ENCODE measurements at regions of chr15 and their contacts with region 1.

Region 1: GRCh38 chr15:89177633-89178306 is 43.6 kb downstream of the RLBP1 start:
- DNase-seq: peak; percentile 77
- H3K4me3 Mint-ChIP-seq: no peak overlapping the region
- H3K27ac Mint-ChIP-seq: no peak overlapping the region
- H3K4me1 Mint-ChIP-seq: peaks cover 39% of the 10 kb centered on the region
- H3K27me3 Mint-ChIP-seq: no peaks in the 10 kb centered on the region

Region 2: GRCh38 chr15:88897456-88898194 is 280.1 kb before region 1 on chr15:
- CTCF ChIA-PET with region 1: no interaction called
- POLR2A ChIA-PET with region 1: no interaction called
- intact Hi-C with region 1: loop called (anchors 2 kb)
- DNase-seq: peak; percentile 78
- H3K4me3 Mint-ChIP-seq: no peak overlapping the region
- H3K27ac Mint-ChIP-seq: no peak overlapping the region
- H3K4me1 Mint-ChIP-seq: peaks cover 41% of the 10 kb centered on the region
- H3K27me3 Mint-ChIP-seq: no peaks in the 10 kb centered on the region

Region 3: GRCh38 chr15:89057504-89058133 is 120.2 kb before region 1 on chr15:
- CTCF ChIA-PET with region 1: interaction called, 276 read pairs
- POLR2A ChIA-PET with region 1: interaction called, 5 read pairs
- intact Hi-C with region 1: loop called (anchors 1 kb)
- DNase-seq: peak; percentile 90
- H3K4me3 Mint-ChIP-seq: no peak overlapping the region
- H3K27ac Mint-ChIP-seq: no peak overlapping the region
- H3K4me1 Mint-ChIP-seq: peaks cover 11% of the 10 kb centered on the region
- H3K27me3 Mint-ChIP-seq: no peaks in the 10 kb centered on the region

Region 4: GRCh38 chr15:89119489-89120123 is 58.2 kb before region 1 on chr15:
- CTCF ChIA-PET with region 1: interaction called, 10 read pairs
- POLR2A ChIA-PET with region 1: no interaction called
- intact Hi-C with region 1: no loop called
- DNase-seq: peak; percentile 27
- H3K4me3 Mint-ChIP-seq: no peak overlapping the region
- H3K27ac Mint-ChIP-seq: peak overlapping the region; percentile 39
- H3K4me1 Mint-ChIP-seq: peaks cover 13% of the 10 kb centered on the region
- H3K27me3 Mint-ChIP-seq: no peaks in the 10 kb centered on the region

Region 5: GRCh38 chr15:89150762-89151664 is 26.8 kb before region 1 on chr15:
- CTCF ChIA-PET with region 1: interaction called, 16 read pairs
- POLR2A ChIA-PET with region 1: no interaction called
- intact Hi-C with region 1: no loop called
- DNase-seq: no peak
- H3K4me3 Mint-ChIP-seq: no peak overlapping the region
- H3K27ac Mint-ChIP-seq: no peak overlapping the region
- H3K4me1 Mint-ChIP-seq: no peaks in the 10 kb centered on the region
- H3K27me3 Mint-ChIP-seq: no peaks in the 10 kb centered on the region

Region 6: DNA sequence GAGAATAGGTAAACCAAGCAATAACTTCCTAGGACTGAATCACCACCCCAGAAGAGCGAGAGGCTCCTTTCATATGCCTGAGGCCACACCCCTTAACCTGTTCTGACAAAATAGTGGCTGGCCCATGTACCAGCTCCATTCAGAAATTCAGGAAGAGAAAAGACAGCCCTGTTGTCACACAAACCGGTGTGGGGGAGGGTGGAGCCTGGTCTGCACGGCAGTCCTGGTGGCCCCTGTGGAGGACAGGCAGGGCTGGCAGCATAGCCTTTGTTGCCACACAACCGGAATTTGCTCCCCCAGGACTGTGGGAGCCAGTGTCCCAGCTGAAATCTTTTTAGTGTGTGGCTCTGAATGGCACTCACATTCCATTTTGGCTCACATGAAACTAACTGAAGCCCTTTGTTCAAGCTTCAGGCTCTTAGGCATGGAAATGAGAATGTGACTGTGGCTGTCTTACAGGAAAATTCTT is 19.8 kb after region 1 on chr15:
- CTCF ChIA-PET with region 1: interaction called, 18 read pairs
- POLR2A ChIA-PET with region 1: no interaction called
- intact Hi-C with region 1: loop called (anchors 1 kb)
- DNase-seq: peak; percentile 55
- H3K4me3 Mint-ChIP-seq: no peak overlapping the region
- H3K27ac Mint-ChIP-seq: peak overlapping the region; percentile 85
- H3K4me1 Mint-ChIP-seq: peaks cover 36% of the 10 kb centered on the region
- H3K27me3 Mint-ChIP-seq: no peaks in the 10 kb centered on the region